ENCODE measurements at regions of chr1 and their contacts with region 1.

Region 1: GRCh38 chr1:114346480-114347029 is 164.4 kb downstream of the TRIM33 start:
- DNase-seq: peak; percentile 98
- H3K4me3 Mint-ChIP-seq: peak overlapping the region; percentile 84
- H3K27ac Mint-ChIP-seq: peak overlapping the region; percentile 80
- H3K4me1 Mint-ChIP-seq: peaks cover 18% of the 10 kb centered on the region
- H3K27me3 Mint-ChIP-seq: no peaks in the 10 kb centered on the region

Region 2: GRCh38 chr1:114334297-114334696 is 12.3 kb before region 1 on chr1:
- CTCF ChIA-PET with region 1: interaction called, 15 read pairs
- intact Hi-C with region 1: loop called (anchors 1 kb)
- DNase-seq: no peak
- H3K4me3 Mint-ChIP-seq: no peak overlapping the region
- H3K27ac Mint-ChIP-seq: no peak overlapping the region
- H3K4me1 Mint-ChIP-seq: peaks cover 51% of the 10 kb centered on the region
- H3K27me3 Mint-ChIP-seq: no peaks in the 10 kb centered on the region

Region 3: DNA sequence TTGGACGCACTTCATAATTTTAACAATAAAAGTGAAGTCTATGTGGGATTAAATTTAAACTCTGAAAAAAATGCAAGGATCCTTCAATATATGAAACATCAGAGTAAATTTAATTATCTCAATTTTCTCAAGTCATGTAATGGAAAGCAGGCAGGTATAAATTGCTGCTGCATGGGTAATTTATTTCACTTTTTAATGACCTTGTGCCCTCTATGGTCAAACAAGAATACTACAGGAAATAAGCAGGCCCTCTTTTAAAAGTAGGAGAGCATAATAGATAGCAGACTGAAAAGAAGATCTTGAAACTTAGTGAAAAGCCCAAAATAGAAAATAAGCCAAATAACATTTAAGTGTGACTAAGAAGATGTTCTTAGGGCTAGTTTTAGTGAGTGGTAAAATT is 212.0 kb after region 1 on chr1:
- CTCF ChIA-PET with region 1: interaction called, 19 read pairs
- intact Hi-C with region 1: loop called (anchors 1 kb)
- DNase-seq: no peak
- H3K4me3 Mint-ChIP-seq: no peak overlapping the region
- H3K27ac Mint-ChIP-seq: no peak overlapping the region
- H3K4me1 Mint-ChIP-seq: no peaks in the 10 kb centered on the region
- H3K27me3 Mint-ChIP-seq: no peaks in the 10 kb centered on the region

Region 4: GRCh38 chr1:114716304-114717170 is 370.0 kb after region 1 on chr1 and contains the start of gene NRAS:
- CTCF ChIA-PET with region 1: interaction called, 7 read pairs
- intact Hi-C with region 1: loop called (anchors 1 kb)
- DNase-seq: peak; percentile 96
- H3K4me3 Mint-ChIP-seq: peak within 1 kb of the TSS; percentile 98
- H3K27ac Mint-ChIP-seq: peak within 1 kb of the TSS; percentile 99
- H3K4me1 Mint-ChIP-seq: peaks cover 27% of the 10 kb centered on the region
- H3K27me3 Mint-ChIP-seq: no peaks in the 10 kb centered on the region
- total RNA-seq, gene NRAS: 42.1 to 43.9 TPM

Region 5: DNA sequence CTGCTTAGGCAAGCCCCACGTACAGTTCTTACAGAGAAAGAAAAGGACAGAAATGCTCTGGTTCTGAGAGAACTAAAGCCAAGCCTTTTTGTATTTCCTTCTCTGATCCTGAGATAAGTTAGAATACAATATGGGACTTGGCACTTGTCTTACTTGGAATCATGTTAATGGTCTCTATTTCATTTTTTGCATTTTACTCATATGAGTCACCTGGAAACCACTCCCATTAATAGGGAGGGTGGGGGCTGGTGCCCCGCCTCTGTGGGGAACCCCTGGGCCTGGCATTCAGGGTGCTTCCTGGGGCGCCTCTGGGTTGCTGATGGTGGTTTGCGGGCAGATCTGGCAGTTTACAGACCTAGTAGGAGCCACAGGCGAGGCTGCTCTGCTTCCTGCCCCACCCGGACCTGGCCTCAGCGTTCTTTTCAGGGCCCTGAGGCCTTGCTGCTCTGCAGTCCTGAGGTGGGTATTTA is 716.0 kb after region 1 on chr1:
- CTCF ChIA-PET with region 1: no interaction called
- intact Hi-C with region 1: loop called (anchors 2 kb)
- DNase-seq: peak; percentile 96
- H3K4me3 Mint-ChIP-seq: no peak overlapping the region
- H3K27ac Mint-ChIP-seq: peak overlapping the region; percentile 74
- H3K4me1 Mint-ChIP-seq: peaks cover 41% of the 10 kb centered on the region
- H3K27me3 Mint-ChIP-seq: no peaks in the 10 kb centered on the region

Measured in activated naive CD4-positive, alpha-beta T cell treated with anti-CD3 and anti-CD28 coated beads for 36 hours (primary cell).